ENCODE measurements at regions of chr1 and their contacts with region 1.

Region 1: GRCh38 chr1:3382326-3383057 is 72.0 kb upstream of the ARHGEF16 start:
- DNase-seq: no peak
- H3K4me3 ChIP-seq: no peak overlapping the region
- H3K27ac ChIP-seq: no peak overlapping the region
- H3K4me1 ChIP-seq: no peaks in the 10 kb centered on the region
- H3K27me3 ChIP-seq: peaks cover 0 to 52% of the 10 kb centered on the region in 2 donors
- CTCF ChIP-seq: no peak
- POLR2A ChIP-seq: no peak

Region 2: GRCh38 chr1:3333903-3334302 is 48.6 kb before region 1 on chr1:
- intact Hi-C with region 1: loop called (anchors 2 kb)
- DNase-seq: no peak
- H3K4me3 ChIP-seq: no peak overlapping the region
- H3K27ac ChIP-seq: no peak overlapping the region
- H3K4me1 ChIP-seq: no peaks in the 10 kb centered on the region
- H3K27me3 ChIP-seq: peaks cover 0 to 19% of the 10 kb centered on the region in 2 donors
- CTCF ChIP-seq: no peak
- POLR2A ChIP-seq: no peak

Measured in breast epithelium (tissue), 4 donors.